Heart right ventricle (tissue), 16 donors: ENCODE measurements at regions of chr2 and their contacts with region 1.

Region 1: GRCh38 chr2:237512774-237513466 is 25.9 kb downstream of the MLPH start:
- DNase-seq: peak; percentile 85 to 88
- ATAC-seq: peak; percentile 62 to 86 (median 74)
- H3K4me3 ChIP-seq: no peak overlapping the region
- H3K27ac ChIP-seq: peak overlapping the region in 9 of 10 donors; percentile 57 to 87 (median 81)
- H3K4me1 ChIP-seq: peaks cover 5 to 61% (median 45%) of the 10 kb centered on the region in 9 donors
- H3K27me3 ChIP-seq: no peaks in the 10 kb centered on the region
- CTCF ChIP-seq: peak; percentile 86 to 98 (median 87)

Region 2: DNA sequence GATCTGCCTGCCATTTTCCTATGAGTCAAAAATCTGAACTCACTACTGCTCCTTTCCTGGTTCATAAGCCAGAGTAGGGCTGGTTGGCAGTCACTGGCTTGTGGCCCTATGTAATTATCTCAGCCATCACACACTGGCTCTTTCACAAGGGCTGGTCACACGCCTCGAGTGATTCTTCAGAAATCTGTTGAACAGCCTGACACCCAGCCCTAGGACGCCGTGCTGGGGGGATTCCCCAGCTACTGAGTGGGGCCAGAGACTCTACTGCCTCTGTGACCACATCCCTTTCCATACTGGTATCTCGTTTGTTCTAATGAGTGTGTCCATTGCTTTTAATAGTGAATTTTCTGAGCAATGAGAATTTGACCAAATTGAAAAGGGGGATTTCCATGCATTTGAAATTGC is 239.8 kb after region 1 on chr2:
- intact Hi-C with region 1: loop called in 5 of 10 experiments (anchors 5 to 10 kb)
- DNase-seq: no peak
- ATAC-seq: peak in 3 of 8 donors; percentile 14 to 35 (median 19)
- H3K4me3 ChIP-seq: no peak overlapping the region
- H3K27ac ChIP-seq: no peak overlapping the region
- H3K4me1 ChIP-seq: peaks cover 0 to 10% (median 0%) of the 10 kb centered on the region in 9 donors
- H3K27me3 ChIP-seq: no peaks in the 10 kb centered on the region
- CTCF ChIP-seq: no peak

Region 3: DNA sequence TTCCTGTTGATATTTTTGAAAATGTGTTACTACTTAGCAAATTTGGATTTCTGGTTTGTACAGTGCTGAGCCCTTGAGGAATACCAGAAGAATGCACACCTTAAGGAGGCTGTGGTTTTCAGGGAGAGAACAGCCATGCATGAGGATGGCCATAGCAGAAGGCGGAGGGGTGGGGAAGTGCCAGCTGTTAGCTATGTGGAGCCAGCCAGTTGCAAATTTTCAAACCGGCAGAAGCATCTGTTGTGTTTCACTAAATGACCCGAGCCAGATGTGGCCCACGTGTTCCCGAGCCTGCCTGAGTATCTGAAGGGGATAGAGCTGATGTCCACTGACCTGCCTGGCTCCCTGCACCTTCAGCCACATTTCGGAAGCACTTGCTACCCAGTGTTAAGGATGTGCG is 269.3 kb after region 1 on chr2:
- intact Hi-C with region 1: loop called in 1 of 10 experiments (anchors 10 kb)
- DNase-seq: no peak
- ATAC-seq: peak in 3 of 8 donors; percentile 12 to 49 (median 27)
- H3K4me3 ChIP-seq: no peak overlapping the region
- H3K27ac ChIP-seq: no peak overlapping the region
- H3K4me1 ChIP-seq: no peaks in the 10 kb centered on the region
- H3K27me3 ChIP-seq: no peaks in the 10 kb centered on the region
- CTCF ChIP-seq: no peak